ENCODE measurements at regions of chr14 and their contacts with region 1.

Region 1: DNA sequence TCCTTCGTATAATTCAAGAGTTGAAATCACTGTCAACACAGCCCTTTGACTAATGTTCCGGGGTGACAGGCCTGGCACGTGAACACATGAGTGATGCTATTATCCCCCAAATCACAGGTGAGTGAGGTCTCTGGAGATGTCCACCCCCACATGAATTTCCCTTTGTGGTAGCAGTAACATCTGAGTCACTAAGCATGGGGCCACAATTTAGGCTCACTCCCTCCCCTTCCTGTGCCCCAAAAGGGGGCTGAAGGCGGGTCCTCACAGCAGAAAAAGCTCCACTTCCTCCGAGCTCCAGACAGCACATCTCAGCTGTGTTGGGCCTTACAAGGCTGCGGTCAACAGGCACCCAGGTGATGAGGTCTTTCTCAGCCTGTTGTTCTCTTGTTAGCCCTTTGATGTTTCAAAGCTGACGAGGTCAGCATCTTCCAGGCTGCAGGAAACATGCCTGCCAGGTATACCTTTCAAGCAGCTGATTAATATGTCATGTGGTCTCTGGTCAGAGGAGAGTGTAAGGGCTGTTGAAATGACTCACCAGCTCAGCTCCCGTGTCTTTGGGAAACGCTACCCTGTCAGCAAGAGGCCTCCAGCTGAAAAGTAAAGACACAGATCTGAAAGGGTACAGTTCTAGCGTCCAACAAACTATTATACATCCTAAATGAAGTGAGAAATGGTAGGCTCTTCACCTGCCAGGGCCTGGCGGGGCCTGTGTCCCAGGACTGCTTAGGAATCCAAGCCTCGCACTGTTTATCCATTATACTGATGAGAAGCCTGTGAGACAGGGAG is 107.3 kb downstream of the ZFP36L1 start:
- DNase-seq: peak; percentile 87
- H3K4me3 Mint-ChIP-seq: peak overlapping the region; percentile 27
- H3K27ac Mint-ChIP-seq: peak overlapping the region; percentile 95
- H3K4me1 Mint-ChIP-seq: peaks cover 56% of the 10 kb centered on the region
- H3K27me3 Mint-ChIP-seq: no peaks in the 10 kb centered on the region

Region 2: DNA sequence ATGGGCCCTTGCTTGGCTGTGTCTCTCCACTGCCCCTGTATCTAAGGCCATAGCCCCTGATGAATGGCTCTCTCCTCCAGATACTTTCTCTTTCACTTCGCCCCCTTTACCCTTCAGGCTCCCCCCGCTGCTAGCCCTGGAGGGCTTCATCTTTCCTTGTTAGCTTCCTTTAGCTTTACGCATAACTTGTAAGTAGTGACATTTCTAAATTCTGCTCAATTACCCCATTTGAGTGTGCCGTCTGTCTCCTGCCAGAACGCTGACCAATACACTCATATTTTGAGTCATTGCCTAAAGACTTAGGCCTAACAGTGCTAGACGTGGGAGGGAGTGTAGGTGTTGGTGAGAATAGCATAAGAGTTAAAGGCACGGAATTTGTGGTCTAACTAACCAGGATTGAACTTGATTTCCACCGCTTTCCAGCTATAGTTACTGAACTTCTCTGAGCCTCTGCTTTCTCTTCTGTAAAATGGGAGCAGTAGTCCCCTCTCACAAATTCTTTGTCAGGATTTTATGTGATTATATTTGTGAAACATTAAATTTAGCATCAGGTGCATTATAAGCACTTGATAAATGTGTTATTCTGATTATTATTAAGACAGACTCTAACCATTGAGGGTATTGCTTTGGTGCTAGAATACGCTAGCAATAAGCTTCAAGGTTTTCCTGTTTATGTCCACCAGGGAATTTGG is 22.1 kb before region 1 on chr14:
- CTCF ChIA-PET with region 1: interaction called, 3 read pairs
- POLR2A ChIA-PET with region 1: interaction called, 39 read pairs
- DNase-seq: peak; percentile 33
- H3K4me3 Mint-ChIP-seq: peak overlapping the region; percentile 70
- H3K27ac Mint-ChIP-seq: peak overlapping the region; percentile 79
- H3K4me1 Mint-ChIP-seq: peaks cover 34% of the 10 kb centered on the region
- H3K27me3 Mint-ChIP-seq: no peaks in the 10 kb centered on the region

Region 3: DNA sequence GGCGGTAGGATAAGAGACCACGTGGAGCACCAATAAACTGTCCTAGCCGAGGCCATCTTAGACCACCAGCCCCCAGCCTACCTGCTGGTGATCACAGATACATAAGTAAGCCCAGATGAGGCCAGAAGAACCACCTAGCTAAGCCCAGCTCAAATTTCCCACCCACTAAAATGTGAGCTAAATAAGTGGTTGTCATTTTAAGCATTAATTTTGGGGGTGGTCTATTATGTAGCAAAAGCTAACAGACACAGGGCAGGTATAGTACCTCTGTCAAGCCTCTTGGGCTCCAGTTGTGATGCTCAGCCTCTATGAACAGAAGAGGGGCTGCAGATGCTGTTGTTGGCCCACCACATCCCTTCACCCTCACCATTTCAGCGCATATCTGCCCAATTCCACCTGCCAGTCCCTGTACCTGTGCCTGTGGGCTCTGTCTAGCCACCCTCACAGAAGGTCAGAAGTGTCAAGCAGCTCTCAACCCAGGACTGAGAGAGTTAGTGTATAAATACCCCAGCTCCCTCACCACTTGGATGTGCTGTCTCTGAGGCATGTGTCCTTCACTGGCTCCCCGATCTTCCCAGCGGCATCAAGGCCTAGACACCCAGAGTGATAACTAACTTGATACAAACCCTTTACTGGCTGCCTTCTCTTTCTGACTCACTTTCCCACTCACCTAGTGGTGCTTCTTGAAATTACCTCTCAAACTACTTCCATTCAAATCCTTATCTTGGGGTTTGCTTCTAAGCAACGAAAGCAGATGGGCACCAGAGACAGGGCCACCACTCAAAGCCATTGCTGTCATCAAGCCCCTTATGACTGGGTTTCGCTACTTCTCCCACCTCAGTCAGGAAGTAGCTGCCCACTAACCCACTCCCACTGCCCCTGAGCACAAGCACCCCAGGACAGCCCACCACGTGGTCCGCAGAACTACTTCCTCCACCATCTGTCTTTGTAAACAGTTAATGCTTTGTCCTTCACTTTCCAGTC is 89.8 kb after region 1 on chr14:
- CTCF ChIA-PET with region 1: interaction called, 13 read pairs
- POLR2A ChIA-PET with region 1: interaction called, 45 read pairs
- DNase-seq: no peak
- H3K4me3 Mint-ChIP-seq: no peak overlapping the region
- H3K27ac Mint-ChIP-seq: no peak overlapping the region
- H3K4me1 Mint-ChIP-seq: peaks cover 60% of the 10 kb centered on the region
- H3K27me3 Mint-ChIP-seq: no peaks in the 10 kb centered on the region

Region 4: GRCh38 chr14:68788996-68789820 is 103.6 kb after region 1 on chr14:
- CTCF ChIA-PET with region 1: interaction called, 19 read pairs
- POLR2A ChIA-PET with region 1: interaction called, 153 read pairs
- DNase-seq: peak; percentile 91
- H3K4me3 Mint-ChIP-seq: peak overlapping the region; percentile 92
- H3K27ac Mint-ChIP-seq: peak overlapping the region; percentile 100
- H3K4me1 Mint-ChIP-seq: peaks cover 57% of the 10 kb centered on the region
- H3K27me3 Mint-ChIP-seq: no peaks in the 10 kb centered on the region

Region 5: DNA sequence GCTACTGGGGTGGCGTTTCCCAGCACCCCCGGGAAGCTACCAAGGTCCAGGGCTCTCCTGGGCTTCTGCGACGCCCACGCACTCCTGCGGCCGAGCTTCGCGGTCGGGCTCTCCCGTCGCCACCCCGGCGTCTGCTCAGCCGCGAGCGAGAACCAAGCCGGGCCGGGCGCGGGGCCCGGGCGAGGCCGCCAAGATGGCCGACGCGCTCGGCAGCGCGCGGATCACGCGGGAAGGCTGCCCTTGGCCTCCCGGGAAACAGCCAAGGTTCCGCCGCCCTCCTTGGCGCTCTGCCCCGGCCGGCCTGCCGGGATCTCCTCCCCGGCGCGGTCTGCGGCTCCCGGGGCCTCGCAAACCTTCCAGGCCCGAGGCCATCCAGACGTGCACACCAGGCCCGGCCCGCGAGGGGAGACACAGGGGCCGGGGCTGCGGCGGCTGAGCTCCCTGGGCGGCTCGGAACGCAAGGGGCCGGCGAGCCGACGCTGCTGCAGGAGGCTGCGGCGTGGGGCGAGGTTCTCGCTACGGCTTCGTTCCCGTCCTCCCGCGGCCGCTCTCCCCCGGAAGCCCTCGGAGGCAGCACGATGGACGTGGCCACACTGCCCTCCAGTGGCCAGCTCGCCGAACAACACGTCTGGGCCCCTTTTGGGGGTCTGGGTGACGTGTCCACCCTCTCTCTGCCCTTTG is 130.8 kb after region 1 on chr14:
- CTCF ChIA-PET with region 1: interaction called, 12 read pairs
- POLR2A ChIA-PET with region 1: interaction called, 14 read pairs
- DNase-seq: peak; percentile 90
- H3K4me3 Mint-ChIP-seq: peak overlapping the region; percentile 72
- H3K27ac Mint-ChIP-seq: peak overlapping the region; percentile 84
- H3K4me1 Mint-ChIP-seq: peaks cover 53% of the 10 kb centered on the region
- H3K27me3 Mint-ChIP-seq: no peaks in the 10 kb centered on the region

Region 6: DNA sequence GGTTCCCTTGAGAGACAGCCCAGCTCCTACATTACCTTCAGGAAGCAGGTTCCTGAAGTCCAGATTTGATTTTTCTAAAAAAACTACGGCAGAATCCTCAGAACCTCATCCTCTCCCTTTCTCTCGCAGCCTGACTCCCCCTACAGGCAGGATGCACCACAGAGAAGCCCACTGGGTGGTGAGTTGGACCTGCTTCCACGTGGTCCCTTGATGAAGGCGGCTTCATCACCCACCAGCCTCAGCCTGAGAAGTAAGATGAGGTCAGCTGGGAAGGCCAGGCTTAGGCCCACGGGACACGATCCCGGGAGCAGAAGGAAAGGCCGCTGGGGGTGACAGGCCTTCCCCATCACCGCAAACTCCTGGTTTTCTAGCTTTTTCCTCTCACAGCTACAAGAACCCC is 210.5 kb after region 1 on chr14:
- CTCF ChIA-PET with region 1: no interaction called
- POLR2A ChIA-PET with region 1: no interaction called
- DNase-seq: no peak
- H3K4me3 Mint-ChIP-seq: no peak overlapping the region
- H3K27ac Mint-ChIP-seq: no peak overlapping the region
- H3K4me1 Mint-ChIP-seq: peaks cover 12% of the 10 kb centered on the region
- H3K27me3 Mint-ChIP-seq: no peaks in the 10 kb centered on the region